ENCODE measurements at regions of chr11 and their contacts with region 1.

Region 1: DNA sequence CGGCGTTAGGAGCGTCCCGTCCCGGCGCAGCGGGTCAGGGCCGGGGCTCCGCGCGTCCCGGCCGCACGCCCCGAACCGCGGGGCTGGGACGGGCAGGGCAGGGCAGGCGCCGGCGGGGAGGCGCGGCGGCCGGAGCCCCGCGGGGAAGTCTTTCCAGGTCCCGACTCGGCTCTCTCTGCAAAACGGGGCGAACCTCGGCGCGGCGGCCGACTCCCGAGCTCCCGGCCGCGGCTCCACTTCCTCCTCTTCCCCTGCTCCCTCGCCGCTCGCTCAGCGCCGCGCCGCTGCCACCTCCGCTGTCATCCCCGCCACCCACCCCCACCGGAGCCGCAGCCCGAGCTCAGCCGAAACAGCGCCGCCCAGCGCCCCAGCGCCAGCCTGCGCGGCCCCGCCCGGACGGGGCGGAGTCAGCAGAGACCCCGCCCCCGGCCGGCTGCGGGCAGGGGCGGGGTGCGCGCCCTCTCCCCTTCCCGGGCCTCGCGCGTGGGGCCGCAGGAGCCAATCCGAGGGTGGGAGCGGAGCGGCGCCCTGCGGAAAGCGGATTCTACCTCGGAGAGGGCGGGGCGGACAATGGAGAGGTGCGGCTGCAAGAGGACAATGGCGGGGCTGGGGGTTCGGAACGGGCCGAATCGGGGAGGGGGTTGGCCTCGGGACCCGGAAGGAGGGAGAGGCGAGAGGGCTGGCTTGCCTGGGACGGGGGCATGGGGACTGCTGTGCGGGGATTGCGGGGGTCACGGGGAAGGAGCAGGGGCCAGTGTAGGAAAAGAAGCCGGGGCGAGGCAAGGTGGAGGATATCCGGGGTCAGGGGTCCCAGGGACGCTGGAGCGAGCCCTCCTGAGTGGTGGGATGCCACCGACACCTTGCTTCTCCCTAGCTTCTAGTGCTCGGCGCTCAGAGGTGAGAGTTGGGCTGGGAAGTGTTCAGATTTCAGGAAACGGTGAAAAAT is at the start of gene GDPD5:
- DNase-seq: peak; percentile 86 to 97 (median 91)
- ATAC-seq: peak; percentile 99
- H3K4me3 ChIP-seq: peak within 1 kb of the TSS; percentile 61
- H3K4me3 Mint-ChIP-seq: peak within 1 kb of the TSS; percentile 71 to 90 (median 84)
- H3K27ac ChIP-seq: peak within 1 kb of the TSS; percentile 71
- H3K27ac Mint-ChIP-seq: peak within 1 kb of the TSS; percentile 41 to 89 (median 74)
- H3K4me1 ChIP-seq: peaks cover 0 to 16% of the 10 kb centered on the region in 2 donors
- H3K4me1 Mint-ChIP-seq: peaks cover 10 to 37% (median 29%) of the 10 kb centered on the region in 7 donors
- H3K27me3 ChIP-seq: no peaks in the 10 kb centered on the region
- H3K27me3 Mint-ChIP-seq: peaks cover 0 to 24% (median 0%) of the 10 kb centered on the region in 5 donors
- total RNA-seq, gene GDPD5: 18.0 to 50.3 (median 24.7) TPM

Region 2: DNA sequence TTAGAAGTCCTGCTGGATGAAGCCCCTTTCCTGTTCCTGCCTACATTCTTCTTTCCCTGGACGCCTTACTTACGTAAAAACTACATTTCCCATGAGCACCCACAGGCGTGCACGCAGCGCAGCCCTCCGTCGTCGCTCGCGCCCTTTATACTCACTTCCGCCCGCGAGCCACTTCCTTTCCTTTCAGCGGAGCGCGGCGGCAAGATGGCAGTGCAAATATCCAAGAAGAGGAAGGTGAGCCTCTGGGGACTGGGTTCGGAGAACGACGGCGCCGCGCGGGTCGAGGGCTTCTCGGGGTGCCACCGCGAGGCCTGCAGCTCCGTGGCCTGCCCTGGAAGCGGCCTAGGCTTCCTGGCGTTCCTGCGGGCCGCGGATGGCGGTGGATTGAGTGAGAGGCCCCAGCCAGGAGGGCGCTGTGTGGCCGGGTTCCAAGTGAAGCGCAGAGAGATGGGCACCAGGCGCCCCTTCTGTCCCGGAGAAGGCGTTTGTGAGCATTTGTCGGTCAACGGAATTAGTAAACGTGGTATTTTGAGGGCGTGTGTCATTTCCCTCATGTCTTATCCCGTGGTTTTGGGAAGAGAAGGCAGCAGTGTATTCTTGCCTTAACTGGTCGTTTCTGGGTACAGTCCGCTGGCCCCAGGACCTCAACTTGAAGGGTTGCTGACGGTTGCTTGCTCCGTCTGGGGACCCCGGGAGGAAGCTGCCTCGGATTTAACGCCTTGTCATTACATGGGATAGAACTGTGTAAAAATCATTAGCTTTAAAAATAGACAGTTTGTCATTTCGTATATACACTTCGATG is 126.3 kb before region 1 on chr11 and contains the start of gene RPS3:
- CTCF ChIA-PET with region 1: interaction called, 3 read pairs
- POLR2A ChIA-PET with region 1: interaction called, 4 read pairs
- intact Hi-C with region 1: loop called (anchors 2 kb)
- DNase-seq: peak; percentile 81 to 91 (median 88)
- ATAC-seq: peak; percentile 96
- H3K4me3 ChIP-seq: peak within 1 kb of the TSS; percentile 80
- H3K4me3 Mint-ChIP-seq: peak within 1 kb of the TSS; percentile 87 to 99 (median 94)
- H3K27ac ChIP-seq: peak within 1 kb of the TSS; percentile 86
- H3K27ac Mint-ChIP-seq: peak within 1 kb of the TSS; percentile 94 to 99 (median 96)
- H3K4me1 ChIP-seq: peaks cover 16 to 17% of the 10 kb centered on the region in 2 donors
- H3K4me1 Mint-ChIP-seq: peaks cover 20 to 54% (median 48%) of the 10 kb centered on the region in 7 donors
- H3K27me3 ChIP-seq: no peaks in the 10 kb centered on the region
- H3K27me3 Mint-ChIP-seq: peaks cover 0 to 11% (median 0%) of the 10 kb centered on the region in 5 donors
- total RNA-seq, gene RPS3: 3,135 to 5,501 (median 5,089) TPM

Region 3: GRCh38 chr11:75474878-75475766 is 50.7 kb before region 1 on chr11:
- CTCF ChIA-PET with region 1: interaction called, 3 read pairs
- POLR2A ChIA-PET with region 1: no interaction called
- intact Hi-C with region 1: loop called (anchors 1 kb)
- DNase-seq: peak in 8 of 9 donors; percentile 32 to 64 (median 54)
- ATAC-seq: peak; percentile 80
- H3K4me3 ChIP-seq: no peak overlapping the region
- H3K4me3 Mint-ChIP-seq: peak overlapping the region; percentile 10 to 78 (median 67)
- H3K27ac ChIP-seq: peak overlapping the region; percentile 24
- H3K27ac Mint-ChIP-seq: peak overlapping the region; percentile 21 to 91 (median 86)
- H3K4me1 ChIP-seq: peaks cover 15% of the 10 kb centered on the region in 2 donors
- H3K4me1 Mint-ChIP-seq: peaks cover 13 to 23% (median 20%) of the 10 kb centered on the region in 7 donors
- H3K27me3 ChIP-seq: no peaks in the 10 kb centered on the region
- H3K27me3 Mint-ChIP-seq: peaks cover 0 to 4% (median 0%) of the 10 kb centered on the region in 5 donors

Region 4: GRCh38 chr11:75508044-75508561 is 17.8 kb before region 1 on chr11:
- CTCF ChIA-PET with region 1: interaction called, 3 read pairs
- POLR2A ChIA-PET with region 1: interaction called, 5 read pairs
- intact Hi-C with region 1: loop called in 1 of 2 experiments (anchors 1 kb)
- DNase-seq: peak in 6 of 9 donors; percentile 34 to 68 (median 54)
- ATAC-seq: peak; percentile 92
- H3K4me3 ChIP-seq: no peak overlapping the region
- H3K4me3 Mint-ChIP-seq: peak overlapping the region in 8 of 10 donors; percentile 28 to 74 (median 52)
- H3K27ac ChIP-seq: peak overlapping the region; percentile 17
- H3K27ac Mint-ChIP-seq: peak overlapping the region; percentile 23 to 96 (median 82)
- H3K4me1 ChIP-seq: peaks cover 20 to 22% of the 10 kb centered on the region in 2 donors
- H3K4me1 Mint-ChIP-seq: peaks cover 13 to 22% (median 17%) of the 10 kb centered on the region in 7 donors
- H3K27me3 ChIP-seq: no peaks in the 10 kb centered on the region
- H3K27me3 Mint-ChIP-seq: peaks cover 0 to under 1% (median 0%) of the 10 kb centered on the region in 5 donors

Region 5: DNA sequence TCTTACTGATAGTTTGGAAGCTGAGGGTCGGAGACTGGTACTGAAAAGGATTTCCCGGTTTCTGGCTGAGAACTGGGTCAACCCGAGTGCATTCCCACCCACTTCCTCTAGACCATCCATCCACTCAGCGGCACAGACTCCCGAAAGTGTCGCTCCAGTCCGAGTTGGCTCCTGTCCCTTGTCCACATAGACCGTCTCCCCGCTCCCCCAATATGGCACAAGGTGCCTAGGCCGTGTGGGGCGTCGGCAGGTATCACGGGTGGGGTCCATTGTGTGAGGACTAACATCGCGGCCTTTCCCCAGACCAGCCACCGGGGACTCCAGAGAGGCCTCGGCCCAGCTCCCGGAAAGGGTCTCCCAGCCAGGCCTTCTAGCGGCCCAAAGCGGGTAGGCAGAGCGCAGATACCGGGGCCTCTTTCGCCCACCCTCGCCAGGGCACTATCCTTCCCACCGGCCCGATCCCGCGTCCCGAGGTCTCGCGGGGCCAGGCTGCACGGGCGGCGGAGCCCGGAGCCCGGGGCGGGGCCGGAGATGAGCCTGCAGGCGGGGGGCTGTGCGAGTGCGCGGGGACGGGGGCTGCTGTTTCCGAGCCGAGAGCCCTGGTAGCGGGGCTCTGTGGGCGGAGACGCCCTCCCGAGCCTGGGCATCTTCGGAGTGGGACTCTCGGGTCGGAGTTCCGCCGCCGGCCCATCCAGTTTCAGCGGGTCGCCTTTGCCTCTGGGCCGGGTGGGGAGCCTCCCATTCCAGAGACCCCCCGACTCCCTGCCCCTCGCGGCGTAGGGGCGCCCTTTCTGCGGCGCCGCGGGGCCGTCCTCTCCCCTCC is 57.2 kb after region 1 on chr11:
- CTCF ChIA-PET with region 1: no interaction called
- POLR2A ChIA-PET with region 1: no interaction called
- intact Hi-C with region 1: loop called in 1 of 2 experiments (anchors 5 kb)
- DNase-seq: peak; percentile 10 to 60 (median 40)
- ATAC-seq: peak; percentile 87
- H3K4me3 ChIP-seq: peak overlapping the region; percentile 72
- H3K4me3 Mint-ChIP-seq: peak overlapping the region; percentile 42 to 95 (median 82)
- H3K27ac ChIP-seq: peak overlapping the region; percentile 59
- H3K27ac Mint-ChIP-seq: peak overlapping the region in 6 of 9 donors; percentile 77 to 92 (median 86)
- H3K4me1 ChIP-seq: peaks cover 9 to 10% of the 10 kb centered on the region in 2 donors
- H3K4me1 Mint-ChIP-seq: peaks cover 10 to 24% (median 16%) of the 10 kb centered on the region in 7 donors
- H3K27me3 ChIP-seq: no peaks in the 10 kb centered on the region
- H3K27me3 Mint-ChIP-seq: peaks cover 0 to 45% (median 21%) of the 10 kb centered on the region in 5 donors

Region 6: DNA sequence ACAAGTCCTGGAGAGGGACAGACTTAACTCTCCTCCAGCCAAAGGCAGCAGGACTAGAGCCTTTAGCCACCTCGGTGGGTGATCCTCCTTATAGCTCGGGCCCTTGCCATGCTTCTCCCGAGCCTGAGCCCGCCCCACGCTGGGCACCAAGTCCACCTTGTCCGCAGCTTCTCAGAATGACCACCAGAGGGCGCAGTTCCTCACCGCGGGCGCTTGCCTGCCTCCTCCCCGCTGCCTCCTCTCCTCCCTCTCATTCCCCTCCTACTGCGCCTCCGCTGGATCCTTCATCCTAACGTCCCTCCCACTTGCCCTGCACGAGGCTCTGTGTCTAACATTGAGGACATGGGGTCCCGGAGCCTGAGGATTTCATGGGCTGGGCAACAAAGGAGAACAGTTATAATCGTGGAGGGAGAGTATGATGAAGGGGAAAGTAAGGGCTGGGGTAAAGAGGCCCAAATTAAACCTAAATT is 180.4 kb after region 1 on chr11:
- CTCF ChIA-PET with region 1: no interaction called
- POLR2A ChIA-PET with region 1: no interaction called
- intact Hi-C with region 1: no loop called
- DNase-seq: peak; percentile 19 to 65 (median 53)
- ATAC-seq: peak; percentile 92
- H3K4me3 ChIP-seq: no peak overlapping the region
- H3K4me3 Mint-ChIP-seq: peak overlapping the region in 3 of 10 donors; percentile 23 to 57 (median 53)
- H3K27ac ChIP-seq: no peak overlapping the region
- H3K27ac Mint-ChIP-seq: no peak overlapping the region
- H3K4me1 ChIP-seq: no peaks in the 10 kb centered on the region
- H3K4me1 Mint-ChIP-seq: peaks cover 7 to 17% (median 11%) of the 10 kb centered on the region in 7 donors
- H3K27me3 ChIP-seq: no peaks in the 10 kb centered on the region
- H3K27me3 Mint-ChIP-seq: peaks cover 0 to 20% (median 0%) of the 10 kb centered on the region in 5 donors

Measured in naive thymus-derived CD4-positive, alpha-beta T cell (primary cell).